BJ (cell line): ENCODE measurements at regions of chr9 and their contacts with region 1.

Region 1: GRCh38 chr9:94065535-94065961 is 18.7 kb upstream of the PTPDC1 start:
- DNase-seq: peak; percentile 31
- H3K4me3 ChIP-seq: no peak overlapping the region
- H3K27me3 ChIP-seq: no peaks in the 10 kb centered on the region
- CTCF ChIP-seq: peak; percentile 83

Region 2: DNA sequence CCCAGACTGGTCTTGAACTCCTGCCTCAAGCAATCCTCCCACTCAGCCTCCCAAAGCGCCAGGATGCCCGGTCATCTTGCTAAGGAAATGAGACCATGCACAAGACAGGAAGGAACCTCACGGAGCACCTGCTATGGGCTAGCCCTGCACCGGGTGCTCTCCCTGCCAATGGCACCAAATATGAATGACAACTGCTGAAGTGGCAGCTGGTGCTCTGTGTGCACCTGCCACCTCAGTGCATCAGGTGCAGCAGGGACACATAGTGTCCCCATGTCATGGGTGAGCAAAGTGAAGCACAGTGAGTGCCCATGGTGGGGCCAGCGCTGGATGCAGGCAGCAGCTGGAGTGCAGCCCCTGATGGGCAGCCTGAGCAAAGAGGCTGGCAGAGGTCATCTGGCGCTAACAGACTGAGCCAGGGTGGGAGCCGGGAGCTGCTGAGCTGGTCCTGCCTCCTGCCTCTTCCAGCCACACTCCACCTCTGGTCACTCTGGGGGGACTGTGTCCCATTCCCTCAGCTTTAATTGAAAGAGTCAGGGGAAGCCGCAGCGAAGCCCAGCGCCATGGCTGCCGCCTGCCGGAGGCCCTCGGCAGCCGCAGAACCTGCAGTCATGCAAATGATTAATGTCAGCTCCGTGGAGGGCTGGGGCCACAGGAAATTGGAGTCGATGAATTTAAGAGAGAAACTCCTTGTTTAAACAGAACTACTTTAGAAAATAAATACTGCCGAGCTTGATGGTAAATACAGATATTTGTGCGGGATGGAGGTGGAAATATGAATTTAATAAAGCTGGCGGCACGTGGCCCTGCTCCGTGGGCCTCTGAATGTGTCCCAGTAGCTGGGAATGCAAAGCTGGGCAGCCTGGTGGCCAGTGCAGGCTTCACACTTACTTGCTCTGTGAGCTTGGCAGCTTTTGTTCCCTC is 156.7 kb before region 1 on chr9:
- CTCF ChIA-PET with region 1: no interaction called
- POLR2A ChIA-PET with region 1: no interaction called
- DNase-seq: no peak
- H3K4me3 ChIP-seq: no peak overlapping the region
- H3K27me3 ChIP-seq: no peaks in the 10 kb centered on the region
- CTCF ChIP-seq: no peak

Region 3: GRCh38 chr9:94014065-94014654 is 51.4 kb before region 1 on chr9:
- CTCF ChIA-PET with region 1: interaction called, 37 read pairs
- POLR2A ChIA-PET with region 1: no interaction called
- DNase-seq: no peak
- H3K4me3 ChIP-seq: no peak overlapping the region
- H3K27me3 ChIP-seq: peaks cover 7% of the 10 kb centered on the region; the same call in 1 of the 2 replicates
- CTCF ChIP-seq: peak; percentile 71

Region 4: DNA sequence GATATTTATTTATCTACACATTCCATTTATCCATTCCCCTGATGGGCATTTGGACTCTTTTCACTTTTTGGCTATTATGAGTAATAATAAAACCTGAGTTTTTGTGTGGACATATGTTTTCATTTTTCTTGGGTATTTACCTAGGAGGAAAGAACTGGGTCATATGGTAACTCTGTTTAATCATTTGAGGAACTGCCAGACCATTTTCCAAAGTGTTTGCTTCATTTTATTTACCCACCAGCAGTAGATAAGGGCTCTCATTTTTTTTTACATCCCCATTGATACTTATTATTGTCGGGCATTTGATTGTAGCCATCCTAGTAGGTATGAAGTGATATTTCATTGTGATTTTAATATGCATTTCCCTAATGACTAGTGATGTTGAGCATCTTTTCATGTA is 11.0 kb after region 1 on chr9:
- CTCF ChIA-PET with region 1: interaction called, 21 read pairs
- POLR2A ChIA-PET with region 1: no interaction called
- DNase-seq: no peak
- H3K4me3 ChIP-seq: no peak overlapping the region
- H3K27me3 ChIP-seq: no peaks in the 10 kb centered on the region
- CTCF ChIP-seq: no peak

Region 5: DNA sequence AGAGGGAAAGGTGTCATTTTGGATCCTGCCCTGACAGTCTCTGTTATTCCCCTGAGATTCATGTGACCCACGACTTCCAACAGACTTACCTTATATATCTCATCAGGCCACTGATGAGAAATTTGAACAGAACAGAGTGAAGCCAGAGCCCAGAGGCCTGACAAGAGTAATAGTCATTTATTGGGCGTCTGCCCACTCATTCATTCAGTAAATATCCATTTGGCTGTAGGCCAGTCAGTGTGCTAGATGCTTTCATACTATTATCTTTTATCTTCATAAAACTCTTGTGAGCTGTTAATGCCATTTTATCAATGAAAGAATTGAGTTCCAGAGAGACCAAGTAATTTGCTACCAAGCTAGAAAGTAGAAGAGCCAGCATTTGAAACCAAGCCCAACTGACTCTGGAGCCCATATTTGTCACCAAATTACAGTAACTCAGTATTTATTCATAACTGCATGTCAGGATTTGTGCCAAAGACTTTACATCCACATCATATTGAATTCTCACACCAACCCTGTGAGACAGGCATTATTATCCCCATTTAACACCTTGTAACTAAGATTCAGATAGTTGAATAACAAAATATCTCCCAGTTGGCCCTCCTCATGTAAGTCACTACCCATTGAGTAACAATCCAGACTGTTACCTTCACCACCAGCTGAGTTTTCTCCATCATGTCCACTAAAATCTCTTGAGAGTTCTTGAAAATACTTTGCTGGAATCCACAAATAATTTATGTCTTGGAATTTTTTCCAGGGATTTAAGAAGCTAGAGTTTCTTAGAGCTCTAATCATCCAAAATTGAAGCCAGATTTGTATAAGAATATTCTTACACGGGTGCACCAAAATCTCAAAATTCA is 21.2 kb after region 1 on chr9:
- CTCF ChIA-PET with region 1: interaction called, 12 read pairs
- POLR2A ChIA-PET with region 1: no interaction called
- DNase-seq: no peak
- H3K4me3 ChIP-seq: no peak overlapping the region
- H3K27me3 ChIP-seq: no peaks in the 10 kb centered on the region
- CTCF ChIP-seq: no peak

Region 6: GRCh38 chr9:94213511-94214124 is 148.1 kb after region 1 on chr9:
- CTCF ChIA-PET with region 1: interaction called, 246 read pairs
- POLR2A ChIA-PET with region 1: no interaction called
- DNase-seq: no peak
- H3K4me3 ChIP-seq: no peak overlapping the region
- H3K27me3 ChIP-seq: no peaks in the 10 kb centered on the region
- CTCF ChIP-seq: peak; percentile 73